Vagina (tissue), 2 donors: ENCODE measurements at regions of chr11 and their contacts with region 1.

Region 1: GRCh38 chr11:9015677-9016076 is 11.9 kb upstream of the NRIP3 start:
- DNase-seq: no peak
- H3K4me3 ChIP-seq: no peak overlapping the region
- H3K27ac ChIP-seq: no peak overlapping the region
- H3K4me1 ChIP-seq: peaks cover 5% of the 10 kb centered on the region
- H3K27me3 ChIP-seq: no peaks in the 10 kb centered on the region
- CTCF ChIP-seq: peak; percentile 45 to 67 (median 45)
- POLR2A ChIP-seq: no peak

Region 2: DNA sequence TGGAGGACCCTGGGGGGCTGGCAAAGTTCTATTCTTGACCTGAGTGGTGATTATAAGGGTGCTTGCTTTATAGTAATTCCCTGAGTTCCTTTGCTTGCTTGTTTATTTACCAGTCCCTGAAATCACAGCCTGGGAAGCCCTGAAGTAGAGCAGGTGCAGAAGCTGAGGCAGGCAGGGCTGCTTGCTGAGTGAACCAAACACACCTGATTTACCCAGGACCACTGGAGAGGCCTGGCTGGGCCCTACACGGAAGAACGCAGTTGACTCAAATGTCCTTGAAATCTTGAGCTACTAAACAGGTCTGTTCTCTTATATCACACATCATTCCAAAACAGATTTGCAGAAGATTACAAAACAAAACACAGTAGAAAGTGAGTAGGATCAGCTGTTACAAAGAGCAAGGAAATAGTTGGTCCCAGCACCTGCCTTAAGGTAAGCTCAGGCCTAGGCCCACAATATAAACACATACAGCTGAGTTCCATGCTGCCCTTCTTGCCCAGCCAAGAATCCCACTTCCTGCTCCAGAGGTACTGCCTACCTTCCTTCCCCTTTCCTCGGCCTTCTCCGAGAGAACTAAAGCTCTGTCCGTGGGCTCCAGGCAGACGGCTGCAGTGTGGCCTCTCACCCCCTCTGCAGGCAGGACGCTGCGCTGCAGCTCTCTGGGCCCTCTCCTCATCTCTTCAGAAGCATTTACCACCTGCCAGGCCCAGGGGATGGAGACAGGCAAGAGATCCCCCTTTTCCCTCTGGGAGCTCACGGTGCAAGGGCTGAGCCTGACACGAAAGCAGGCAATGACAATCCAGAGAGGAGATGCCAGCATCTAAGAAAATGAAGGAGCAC is 121.8 kb after region 1 on chr11:
- intact Hi-C with region 1: loop called (anchors 2 kb)
- DNase-seq: no peak
- H3K4me3 ChIP-seq: no peak overlapping the region
- H3K27ac ChIP-seq: peak overlapping the region; percentile 33
- H3K4me1 ChIP-seq: peaks cover 32% of the 10 kb centered on the region
- H3K27me3 ChIP-seq: no peaks in the 10 kb centered on the region
- CTCF ChIP-seq: peak; percentile 90 to 93 (median 92)
- POLR2A ChIP-seq: no peak

Region 3: GRCh38 chr11:9210922-9211320 is 195.2 kb after region 1 on chr11:
- intact Hi-C with region 1: no loop called
- DNase-seq: no peak
- H3K4me3 ChIP-seq: no peak overlapping the region
- H3K27ac ChIP-seq: no peak overlapping the region
- H3K4me1 ChIP-seq: peaks cover 32% of the 10 kb centered on the region
- H3K27me3 ChIP-seq: no peaks in the 10 kb centered on the region
- CTCF ChIP-seq: no peak
- POLR2A ChIP-seq: no peak